Natural killer cell (primary cell): ENCODE measurements at regions of chr20 and their contacts with region 1.

Region 1: GRCh38 chr20:18587665-18588573 is at the start of gene DTD1:
- DNase-seq: peak; percentile 85 to 86
- ATAC-seq: peak; percentile 87 to 95 (median 88)
- H3K4me3 ChIP-seq: peak within 1 kb of the TSS; percentile 71
- H3K4me3 Mint-ChIP-seq: peak within 1 kb of the TSS; percentile 90
- H3K27ac ChIP-seq: peak within 1 kb of the TSS; percentile 54
- H3K27ac Mint-ChIP-seq: peak within 1 kb of the TSS; percentile 84 to 87
- H3K4me1 ChIP-seq: peaks cover 14% of the 10 kb centered on the region
- H3K4me1 Mint-ChIP-seq: peaks cover 25 to 26% of the 10 kb centered on the region in 2 donors
- H3K27me3 ChIP-seq: no peaks in the 10 kb centered on the region
- H3K27me3 Mint-ChIP-seq: peaks cover 0 to 6% of the 10 kb centered on the region in 2 donors
- CTCF ChIP-seq: peak; percentile 65
- total RNA-seq, gene DTD1: 23.4 to 28.4 (median 24.1) TPM

Region 2: DNA sequence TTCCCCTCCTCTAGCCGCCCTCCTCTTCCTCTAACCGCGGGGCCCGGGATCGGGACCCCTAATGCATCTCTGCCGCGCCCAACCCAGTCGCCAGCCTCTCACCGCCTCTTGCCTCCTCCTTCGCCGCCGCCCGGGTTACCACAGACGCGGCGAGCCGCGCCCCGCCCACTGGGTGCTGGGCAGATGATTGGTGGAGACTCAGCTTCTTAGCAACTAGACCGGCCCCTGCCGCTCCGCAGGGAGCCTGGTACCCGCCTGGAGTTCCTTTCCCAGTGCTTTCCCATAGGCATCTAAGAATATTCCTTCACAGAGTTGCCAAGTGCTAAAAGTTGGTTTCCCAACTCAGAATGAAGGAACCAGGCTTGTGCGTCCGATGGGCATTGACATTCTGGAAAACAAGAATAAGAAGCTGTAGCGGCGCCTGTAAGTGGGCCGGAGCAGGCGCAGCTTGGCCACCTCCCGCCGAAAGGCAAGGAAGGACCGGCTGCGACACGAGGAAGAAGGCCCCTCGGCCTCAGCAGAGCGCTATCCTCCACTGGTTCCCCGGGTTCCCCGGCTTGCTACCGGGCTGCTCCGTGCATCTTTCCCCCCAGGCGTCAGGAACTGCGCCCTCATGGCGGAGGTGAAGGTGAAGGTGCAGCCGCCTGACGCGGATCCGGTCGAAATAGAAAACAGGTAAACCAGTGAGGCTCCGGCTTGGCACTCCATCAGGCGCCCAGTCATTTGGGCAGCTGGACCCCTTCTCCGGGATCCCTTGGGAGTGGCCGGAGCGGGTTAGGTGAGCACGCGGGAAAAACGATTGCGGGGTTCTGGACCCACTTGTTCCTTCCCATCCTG is 120.8 kb before region 1 on chr20 and contains the starts of genes DZANK1 and POLR3F:
- intact Hi-C with region 1: loop called (anchors 5 kb)
- DNase-seq: peak; percentile 87 to 94
- ATAC-seq: peak; percentile 92 to 95 (median 94)
- H3K4me3 ChIP-seq: peak within 1 kb of the TSS; percentile 70
- H3K4me3 Mint-ChIP-seq: peak within 1 kb of the TSS; percentile 97
- H3K27ac ChIP-seq: peak within 1 kb of the TSS; percentile 84
- H3K27ac Mint-ChIP-seq: peak within 1 kb of the TSS; percentile 95 to 97
- H3K4me1 ChIP-seq: peaks cover 16% of the 10 kb centered on the region
- H3K4me1 Mint-ChIP-seq: peaks cover 21 to 28% of the 10 kb centered on the region in 2 donors
- H3K27me3 ChIP-seq: no peaks in the 10 kb centered on the region
- H3K27me3 Mint-ChIP-seq: no peaks in the 10 kb centered on the region
- CTCF ChIP-seq: no peak
- total RNA-seq, gene DZANK1: 2.7 to 5.7 (median 3.7) TPM
- total RNA-seq, gene POLR3F: 8.5 to 10.6 (median 8.8) TPM